MCF 10A (cell line): ENCODE measurements at regions of chr1 and their contacts with region 1.

Region 1: DNA sequence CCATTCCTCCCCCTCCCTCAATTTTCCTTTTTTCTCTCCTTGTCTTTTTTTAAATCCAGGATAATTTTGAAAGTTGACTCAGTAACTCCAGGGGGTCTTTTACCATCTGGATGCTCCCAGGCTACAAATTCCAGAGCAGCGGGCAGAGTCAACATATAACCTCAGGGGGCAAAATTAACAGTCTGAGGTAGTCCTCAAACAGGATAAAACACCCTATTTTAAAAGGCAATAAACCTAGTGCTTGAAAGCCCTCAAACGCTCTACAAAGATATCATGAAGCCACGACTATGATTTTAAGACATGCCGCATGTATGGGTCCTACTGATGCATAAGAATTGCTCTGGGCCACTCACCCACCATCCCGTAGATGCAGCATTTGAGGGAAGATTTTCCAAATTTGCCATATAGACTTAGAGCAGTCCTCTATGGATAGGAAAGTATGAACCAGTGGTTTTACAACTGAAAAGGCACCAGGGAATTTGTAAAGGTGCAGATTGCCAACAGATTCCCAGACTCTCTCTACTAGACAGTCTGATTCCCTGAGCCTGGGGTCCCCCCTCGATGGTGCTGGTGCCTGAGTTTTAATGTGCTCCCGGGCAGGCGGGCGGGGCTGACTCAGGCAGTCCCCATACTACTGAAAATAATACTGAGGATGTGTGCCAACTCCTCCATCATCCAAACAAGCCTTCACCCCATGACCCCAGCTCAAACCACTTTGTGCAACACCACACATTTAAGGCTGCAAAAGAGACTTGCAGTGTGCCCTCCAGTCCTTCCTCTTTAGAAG is 37.2 kb downstream of the PTPN14 start:
- DNase-seq: peak; percentile 71
- H3K4me3 Mint-ChIP-seq: no peak overlapping the region
- H3K27ac Mint-ChIP-seq: peak overlapping the region; percentile 78
- H3K4me1 Mint-ChIP-seq: peaks cover 75% of the 10 kb centered on the region
- H3K27me3 Mint-ChIP-seq: no peaks in the 10 kb centered on the region
- CTCF ChIP-seq: no peak

Region 2: GRCh38 chr1:214537219-214537618 is 23.0 kb after region 1 on chr1:
- CTCF ChIA-PET with region 1: interaction called, 3 read pairs
- POLR2A ChIA-PET with region 1: interaction called, 16 read pairs
- intact Hi-C with region 1: no loop called
- DNase-seq: peak; percentile 61
- H3K4me3 Mint-ChIP-seq: no peak overlapping the region
- H3K27ac Mint-ChIP-seq: no peak overlapping the region
- H3K4me1 Mint-ChIP-seq: peaks cover 47% of the 10 kb centered on the region
- H3K27me3 Mint-ChIP-seq: no peaks in the 10 kb centered on the region
- CTCF ChIP-seq: no peak

Region 3: DNA sequence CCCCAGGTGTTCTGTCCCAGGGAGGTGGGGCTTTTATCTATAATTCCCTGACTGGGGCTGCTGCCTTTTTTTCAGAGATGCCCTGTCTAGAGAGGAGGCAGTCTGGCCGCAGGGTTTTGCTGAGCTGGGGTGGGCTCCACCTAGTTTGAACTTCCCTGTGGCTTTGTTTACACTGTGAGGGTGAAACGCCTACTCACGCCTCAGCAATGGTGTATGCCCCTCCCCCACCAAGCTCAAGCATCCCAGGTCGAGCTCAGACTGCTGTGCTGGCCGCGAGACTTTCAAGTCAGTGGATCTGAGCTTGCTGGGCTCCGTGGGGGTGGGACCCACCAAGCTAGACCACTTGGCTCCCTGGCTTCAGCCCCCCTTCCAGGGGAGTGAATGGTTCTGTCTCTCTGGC is 213.0 kb after region 1 on chr1:
- CTCF ChIA-PET with region 1: no interaction called
- POLR2A ChIA-PET with region 1: no interaction called
- intact Hi-C with region 1: no loop called
- DNase-seq: no peak
- H3K4me3 Mint-ChIP-seq: no peak overlapping the region
- H3K27ac Mint-ChIP-seq: no peak overlapping the region
- H3K4me1 Mint-ChIP-seq: no peaks in the 10 kb centered on the region
- H3K27me3 Mint-ChIP-seq: peaks cover 62% of the 10 kb centered on the region
- CTCF ChIP-seq: no peak

Region 4: GRCh38 chr1:215250913-215251312 is 736.7 kb after region 1 on chr1:
- CTCF ChIA-PET with region 1: no interaction called
- POLR2A ChIA-PET with region 1: no interaction called
- intact Hi-C with region 1: no loop called
- DNase-seq: no peak
- H3K4me3 Mint-ChIP-seq: no peak overlapping the region
- H3K27ac Mint-ChIP-seq: no peak overlapping the region
- H3K4me1 Mint-ChIP-seq: no peaks in the 10 kb centered on the region
- H3K27me3 Mint-ChIP-seq: no peaks in the 10 kb centered on the region
- CTCF ChIP-seq: no peak